CD4-positive, alpha-beta T cell (primary cell): ENCODE measurements at regions of chr21 and their contacts with region 1.

Region 1: DNA sequence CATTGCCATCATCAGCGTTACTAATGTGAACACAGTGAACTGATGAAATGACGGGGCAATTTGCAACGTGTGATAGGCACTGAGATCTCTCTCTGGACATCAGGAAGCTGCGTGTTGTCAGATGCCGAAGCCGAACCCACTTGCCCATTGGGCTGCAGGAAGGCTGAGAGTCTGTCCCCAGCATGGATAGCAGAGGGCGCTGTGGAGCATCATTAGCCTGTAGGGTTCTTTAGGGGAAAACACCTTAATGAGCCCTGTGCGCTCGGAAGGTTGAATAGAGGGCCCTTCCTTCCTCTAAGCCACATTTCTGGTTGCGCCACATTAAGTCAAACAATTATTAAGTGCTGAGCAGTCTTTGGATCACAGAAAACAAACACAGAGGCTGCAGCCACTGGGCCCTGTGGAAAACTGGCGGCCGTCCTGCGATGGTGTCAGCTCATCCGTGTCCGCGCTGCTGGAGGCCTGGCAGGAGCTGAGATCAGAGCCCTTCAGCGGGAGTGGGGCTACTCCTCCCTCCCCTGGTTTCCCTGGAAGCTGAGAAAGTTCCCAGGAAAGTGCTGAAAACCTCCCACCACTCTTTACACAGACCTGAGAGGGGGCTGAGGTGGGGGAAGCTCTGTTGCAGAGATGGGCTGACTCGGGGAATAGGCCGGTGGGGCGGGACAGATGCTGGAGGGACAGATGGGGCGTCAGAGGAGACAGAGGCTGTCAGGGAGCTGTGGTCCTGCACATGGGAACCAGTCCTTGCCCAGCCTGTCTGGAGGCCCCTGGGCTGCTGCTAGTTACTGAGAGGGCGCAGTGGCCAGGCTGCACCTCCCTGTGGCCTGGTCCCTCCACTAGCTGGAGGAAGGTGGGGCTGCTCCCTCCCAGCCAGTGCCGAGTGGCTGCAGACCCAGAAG is 12.7 kb downstream of the TFF2 start:
- DNase-seq: peak; percentile 74 to 93 (median 82)
- ATAC-seq: peak; percentile 100
- H3K4me3 ChIP-seq: no peak overlapping the region
- H3K4me3 Mint-ChIP-seq: no peak overlapping the region
- H3K27ac ChIP-seq: no peak overlapping the region
- H3K27ac Mint-ChIP-seq: peak overlapping the region; percentile 28
- H3K4me1 ChIP-seq: peaks cover 9% of the 10 kb centered on the region
- H3K4me1 Mint-ChIP-seq: peaks cover 8% of the 10 kb centered on the region
- H3K27me3 ChIP-seq: peaks cover 0 to 3% of the 10 kb centered on the region in 2 experiments
- H3K27me3 Mint-ChIP-seq: no peaks in the 10 kb centered on the region
- CTCF ChIP-seq: peak; percentile 87

Region 2: DNA sequence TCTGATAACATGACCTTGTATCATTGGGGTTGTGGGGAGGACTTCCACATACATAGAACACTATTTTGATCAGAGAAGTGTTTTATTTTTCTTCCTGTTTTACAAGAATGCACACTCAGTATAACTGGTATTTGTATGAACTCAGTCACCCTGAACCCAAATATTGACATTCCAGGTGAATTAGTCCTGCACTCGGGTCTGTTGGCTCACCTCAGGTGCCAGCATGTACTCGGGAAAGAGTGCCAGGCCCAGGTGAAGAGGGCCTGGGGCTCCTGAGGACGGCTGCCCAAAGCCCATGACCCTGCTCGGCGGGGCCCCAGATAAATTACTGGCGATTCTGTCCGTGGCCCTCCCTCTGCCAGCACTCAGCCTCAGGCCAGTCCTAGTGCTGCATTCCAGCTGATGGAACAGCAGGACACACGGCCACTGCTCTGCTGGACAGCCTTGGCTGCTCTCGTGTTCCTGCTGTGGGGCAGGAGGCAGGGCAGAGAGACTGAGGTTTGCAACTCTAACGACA is 754.7 kb before region 1 on chr21:
- CTCF ChIA-PET with region 1: no interaction called
- POLR2A ChIA-PET with region 1: no interaction called
- intact Hi-C with region 1: no loop called
- DNase-seq: no peak
- ATAC-seq: no peak
- H3K4me3 ChIP-seq: no peak overlapping the region
- H3K4me3 Mint-ChIP-seq: no peak overlapping the region
- H3K27ac ChIP-seq: no peak overlapping the region
- H3K27ac Mint-ChIP-seq: no peak overlapping the region
- H3K4me1 ChIP-seq: no peaks in the 10 kb centered on the region
- H3K4me1 Mint-ChIP-seq: no peaks in the 10 kb centered on the region
- H3K27me3 ChIP-seq: peaks cover 0 to 3% of the 10 kb centered on the region in 2 experiments
- H3K27me3 Mint-ChIP-seq: peaks cover 3% of the 10 kb centered on the region
- CTCF ChIP-seq: no peak

Region 3: DNA sequence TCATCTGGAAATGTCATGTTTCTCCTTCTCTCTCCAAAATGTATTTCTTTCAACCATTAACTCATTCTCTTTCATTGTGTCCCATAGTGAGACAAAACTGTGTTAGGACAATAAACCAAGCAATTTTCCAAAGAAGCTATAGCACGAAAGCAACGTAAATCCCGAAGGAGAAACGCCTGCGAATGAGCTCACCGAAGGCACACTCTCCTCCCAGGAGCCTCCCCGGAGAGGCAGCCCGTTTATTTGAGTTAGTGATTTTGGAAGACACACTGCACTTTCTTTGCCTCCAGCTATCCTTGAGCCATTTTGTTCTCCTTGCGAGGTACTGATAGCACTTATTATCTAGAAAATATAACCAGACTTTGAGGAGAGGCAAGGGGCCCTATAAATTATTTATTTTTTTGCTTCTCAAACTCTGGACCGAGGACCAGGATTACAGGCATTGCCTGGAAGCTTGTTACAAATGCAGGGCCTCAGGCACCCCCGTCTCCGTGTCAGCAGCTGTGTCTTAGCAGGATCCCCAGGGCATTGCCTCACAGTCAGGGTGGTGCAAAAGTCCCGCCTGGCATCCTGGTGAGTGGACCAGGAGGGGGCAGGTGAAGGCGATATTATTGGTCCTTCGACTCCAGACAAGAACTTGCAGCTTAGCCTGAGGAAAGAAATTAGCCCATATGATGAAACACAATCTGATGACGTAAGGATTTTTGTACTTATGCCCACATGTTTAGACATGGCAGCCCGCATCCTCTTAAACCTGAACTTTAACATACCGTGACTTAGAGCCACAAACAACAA is 116.9 kb after region 1 on chr21:
- CTCF ChIA-PET with region 1: interaction called, 6 read pairs
- POLR2A ChIA-PET with region 1: interaction called, 3 read pairs
- intact Hi-C with region 1: loop called (anchors 1 kb)
- DNase-seq: no peak
- ATAC-seq: no peak
- H3K4me3 ChIP-seq: no peak overlapping the region
- H3K4me3 Mint-ChIP-seq: no peak overlapping the region
- H3K27ac ChIP-seq: no peak overlapping the region
- H3K27ac Mint-ChIP-seq: peak overlapping the region; percentile 79
- H3K4me1 ChIP-seq: peaks cover 25% of the 10 kb centered on the region
- H3K4me1 Mint-ChIP-seq: peaks cover 32% of the 10 kb centered on the region
- H3K27me3 ChIP-seq: no peaks in the 10 kb centered on the region
- H3K27me3 Mint-ChIP-seq: no peaks in the 10 kb centered on the region
- CTCF ChIP-seq: no peak

Region 4: GRCh38 chr21:42513985-42514882 is 176.2 kb after region 1 on chr21:
- CTCF ChIA-PET with region 1: no interaction called
- POLR2A ChIA-PET with region 1: no interaction called
- intact Hi-C with region 1: loop called in 1 of 2 experiments (anchors 10 kb)
- DNase-seq: peak; percentile 36 to 81 (median 53)
- ATAC-seq: peak; percentile 84
- H3K4me3 ChIP-seq: peak overlapping the region; percentile 82
- H3K4me3 Mint-ChIP-seq: peak overlapping the region; percentile 88
- H3K27ac ChIP-seq: peak overlapping the region; percentile 48 to 65
- H3K27ac Mint-ChIP-seq: peak overlapping the region; percentile 76
- H3K4me1 ChIP-seq: peaks cover 28% of the 10 kb centered on the region
- H3K4me1 Mint-ChIP-seq: peaks cover 31% of the 10 kb centered on the region
- H3K27me3 ChIP-seq: no peaks in the 10 kb centered on the region
- H3K27me3 Mint-ChIP-seq: no peaks in the 10 kb centered on the region
- CTCF ChIP-seq: no peak

Region 5: GRCh38 chr21:42537106-42537742 is 199.1 kb after region 1 on chr21:
- CTCF ChIA-PET with region 1: interaction called, 3 read pairs
- POLR2A ChIA-PET with region 1: no interaction called
- intact Hi-C with region 1: loop called in 1 of 2 experiments (anchors 2 kb)
- DNase-seq: peak in 4 of 14 experiments; percentile 25 to 52 (median 38)
- ATAC-seq: peak; percentile 46
- H3K4me3 ChIP-seq: no peak overlapping the region
- H3K4me3 Mint-ChIP-seq: no peak overlapping the region
- H3K27ac ChIP-seq: no peak overlapping the region
- H3K27ac Mint-ChIP-seq: no peak overlapping the region
- H3K4me1 ChIP-seq: peaks cover 17% of the 10 kb centered on the region
- H3K4me1 Mint-ChIP-seq: peaks cover 15% of the 10 kb centered on the region
- H3K27me3 ChIP-seq: no peaks in the 10 kb centered on the region
- H3K27me3 Mint-ChIP-seq: no peaks in the 10 kb centered on the region
- CTCF ChIP-seq: no peak